HCT116 (cell line): ENCODE measurements at regions of chrX and their contacts with region 1.

Region 1: GRCh38 chrX:104098151-104098808 is 14.0 kb upstream of the ZCCHC18 start:
- DNase-seq: peak; percentile 60
- ATAC-seq: peak; percentile 77
- H3K4me3 ChIP-seq: no peak overlapping the region
- H3K27ac ChIP-seq: no peak overlapping the region
- H3K4me1 ChIP-seq: no peaks in the 10 kb centered on the region
- H3K27me3 ChIP-seq: peaks cover 11% of the 10 kb centered on the region; the same call in 1 of the 2 replicates
- CTCF ChIP-seq: peak; percentile 37 to 51 (median 48); a peak in 5 of 6 replicates
- POLR2A ChIP-seq: no peak
- RAD21 ChIP-seq: peak; percentile 53

Region 2: DNA sequence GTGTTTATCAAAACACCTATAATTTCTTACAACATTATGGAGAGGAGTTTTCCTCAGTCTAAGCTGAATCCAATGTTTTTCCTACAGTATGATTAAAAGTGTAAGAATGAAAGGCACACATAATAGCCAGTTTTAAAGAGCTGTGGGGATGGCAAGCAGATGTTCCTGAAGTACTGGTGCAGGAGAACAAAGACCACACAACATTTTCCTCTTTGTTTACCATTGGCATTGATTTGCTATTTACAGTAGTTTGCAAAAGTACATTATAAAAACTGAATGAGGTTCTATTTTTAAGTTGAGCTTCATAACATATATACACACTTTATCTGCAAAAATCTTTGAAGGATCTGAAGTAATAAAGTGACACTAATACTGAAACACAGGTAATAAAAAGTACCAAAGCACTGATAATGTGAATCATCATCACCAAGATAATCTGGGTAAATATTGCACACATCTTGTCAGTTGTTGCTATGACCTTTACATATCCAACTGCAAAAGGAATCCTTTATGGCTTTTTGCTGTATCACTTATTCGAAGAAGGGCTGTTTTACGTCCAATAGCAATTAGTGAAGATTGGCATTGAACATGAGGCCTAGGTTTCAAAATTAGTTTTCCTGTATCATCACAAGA is 447.0 kb before region 1 on chrX:
- CTCF ChIA-PET with region 1: no interaction called
- POLR2A ChIA-PET with region 1: no interaction called
- RAD21 ChIA-PET with region 1: no interaction called
- intact Hi-C with region 1: no loop called
- DNase-seq: no peak
- ATAC-seq: no peak
- H3K4me3 ChIP-seq: no peak overlapping the region
- H3K27ac ChIP-seq: no peak overlapping the region
- H3K4me1 ChIP-seq: peaks cover 1 to 11% of the 10 kb centered on the region in 2 experiments
- H3K27me3 ChIP-seq: no peaks in the 10 kb centered on the region
- CTCF ChIP-seq: no peak
- POLR2A ChIP-seq: no peak
- RAD21 ChIP-seq: no peak

Region 3: DNA sequence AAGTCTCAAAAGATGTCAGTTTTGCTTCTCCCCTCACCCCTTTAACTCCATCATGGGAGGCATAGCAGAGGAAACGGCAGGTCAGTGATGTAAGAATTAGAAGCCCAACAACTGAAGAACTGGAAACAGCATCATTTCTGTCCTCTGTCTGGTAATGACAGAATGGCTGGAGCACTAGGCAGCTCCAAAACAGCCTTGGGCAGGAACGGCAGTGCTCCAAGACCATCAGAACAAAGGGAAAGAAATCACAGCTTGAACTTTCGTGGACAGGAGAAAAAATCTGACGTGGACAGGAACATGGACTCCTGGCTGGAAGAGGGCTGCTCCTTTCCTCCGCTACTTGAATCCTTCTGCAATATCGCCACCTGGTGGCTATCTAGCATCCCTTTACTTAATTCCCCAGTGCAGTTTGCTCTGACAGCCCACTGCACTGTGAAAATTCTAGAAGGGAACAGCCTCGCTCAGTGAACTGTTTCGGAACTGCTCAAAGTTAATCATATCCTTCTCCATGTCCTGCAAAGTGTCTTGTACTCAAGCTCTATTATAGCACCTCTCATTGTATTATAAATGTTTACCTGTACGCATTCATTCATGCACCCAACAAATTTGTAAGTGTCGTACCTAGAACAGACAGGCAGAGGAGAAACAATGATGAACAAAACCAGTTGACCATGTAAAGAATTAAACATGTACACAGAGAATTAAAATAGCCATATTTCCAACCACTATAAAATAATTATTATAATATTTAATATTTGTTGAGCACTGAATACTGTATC is 38.1 kb after region 1 on chrX:
- CTCF ChIA-PET with region 1: no interaction called
- POLR2A ChIA-PET with region 1: no interaction called
- RAD21 ChIA-PET with region 1: no interaction called
- intact Hi-C with region 1: loop called (anchors 1 kb)
- DNase-seq: peak; percentile 63
- ATAC-seq: peak; percentile 95
- H3K4me3 ChIP-seq: peak overlapping the region; percentile 19 to 34; a peak in 3 of 4 replicates
- H3K27ac ChIP-seq: no peak overlapping the region
- H3K4me1 ChIP-seq: 0 out of 4 replicates have a peak, but pooled peaks cover 0 to 2% of the 10 kb centered on the region in 2 experiments
- H3K27me3 ChIP-seq: no peaks in the 10 kb centered on the region
- CTCF ChIP-seq: peak; percentile 49 to 56 (median 54); a peak in 5 of 6 replicates
- POLR2A ChIP-seq: no peak
- RAD21 ChIP-seq: peak; percentile 69